Spleen (tissue), 13 donors: ENCODE measurements at regions of chr6 and their contacts with region 1.

Region 1: GRCh38 chr6:53492860-53493634 is 51.9 kb downstream of the GCLC start:
- DNase-seq: no peak
- H3K4me3 ChIP-seq: no peak overlapping the region
- H3K27ac ChIP-seq: no peak overlapping the region
- H3K4me1 ChIP-seq: peaks cover 0 to 10% (median 6%) of the 10 kb centered on the region in 6 donors
- H3K27me3 ChIP-seq: peaks cover 0 to 5% (median 0%) of the 10 kb centered on the region in 7 donors
- CTCF ChIP-seq: peak; percentile 37 to 73 (median 68)
- POLR2A ChIP-seq: no peak

Region 2: GRCh38 chr6:53651764-53652401 is 158.8 kb after region 1 on chr6:
- intact Hi-C with region 1: loop called (anchors 5 kb)
- DNase-seq: peak; percentile 95
- H3K4me3 ChIP-seq: peak overlapping the region; percentile 50 to 79 (median 62)
- H3K27ac ChIP-seq: peak overlapping the region; percentile 55 to 82 (median 78)
- H3K4me1 ChIP-seq: peaks cover 17 to 43% (median 32%) of the 10 kb centered on the region in 6 donors
- H3K27me3 ChIP-seq: peaks cover 0 to 12% (median 0%) of the 10 kb centered on the region in 7 donors
- CTCF ChIP-seq: peak in 10 of 11 experiments; percentile 19 to 66 (median 46)
- POLR2A ChIP-seq: no peak

Region 3: DNA sequence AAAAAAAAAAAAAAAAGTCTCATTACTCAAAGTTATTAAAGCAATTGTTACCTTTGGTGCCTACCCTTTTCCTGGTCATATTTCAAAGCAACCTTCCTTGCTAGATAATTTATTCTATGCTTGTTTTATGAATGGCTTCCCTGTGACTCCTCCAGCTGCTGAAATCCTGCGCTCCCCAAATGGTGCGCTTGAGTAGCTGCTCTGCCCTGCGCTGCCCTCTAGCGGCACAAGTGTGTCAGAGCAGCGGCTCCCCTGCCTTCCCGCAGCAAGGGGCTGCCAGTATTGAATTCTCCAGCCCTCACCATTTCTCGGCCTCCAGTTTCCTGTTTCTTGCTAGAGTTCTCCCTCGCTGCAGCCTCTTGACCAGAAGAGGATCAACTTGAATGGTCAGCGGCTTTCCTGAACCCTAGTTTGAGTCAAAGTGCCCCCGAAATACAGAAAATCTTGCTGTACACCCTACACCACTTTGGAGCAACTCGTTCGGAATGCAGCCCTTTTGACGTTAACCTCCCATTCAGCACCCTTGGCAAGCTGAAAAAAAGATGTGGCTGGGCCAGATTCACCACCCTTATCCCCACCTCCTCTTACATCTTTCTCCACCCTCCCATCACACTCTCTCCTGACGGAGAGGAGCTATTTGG is 232.9 kb after region 1 on chr6:
- intact Hi-C with region 1: loop called (anchors 5 kb)
- DNase-seq: peak; percentile 93
- H3K4me3 ChIP-seq: no peak overlapping the region
- H3K27ac ChIP-seq: no peak overlapping the region
- H3K4me1 ChIP-seq: peaks cover 0 to 15% (median 7%) of the 10 kb centered on the region in 6 donors
- H3K27me3 ChIP-seq: peaks cover 0 to 14% (median 0%) of the 10 kb centered on the region in 7 donors
- CTCF ChIP-seq: peak; percentile 80 to 97 (median 93)
- POLR2A ChIP-seq: no peak

Region 4: GRCh38 chr6:53737745-53738144 is 244.7 kb after region 1 on chr6:
- intact Hi-C with region 1: no loop called
- DNase-seq: no peak
- H3K4me3 ChIP-seq: no peak overlapping the region
- H3K27ac ChIP-seq: no peak overlapping the region
- H3K4me1 ChIP-seq: peaks cover 0 to 14% (median 5%) of the 10 kb centered on the region in 6 donors
- H3K27me3 ChIP-seq: no peaks in the 10 kb centered on the region
- CTCF ChIP-seq: no peak
- POLR2A ChIP-seq: no peak

Region 5: DNA sequence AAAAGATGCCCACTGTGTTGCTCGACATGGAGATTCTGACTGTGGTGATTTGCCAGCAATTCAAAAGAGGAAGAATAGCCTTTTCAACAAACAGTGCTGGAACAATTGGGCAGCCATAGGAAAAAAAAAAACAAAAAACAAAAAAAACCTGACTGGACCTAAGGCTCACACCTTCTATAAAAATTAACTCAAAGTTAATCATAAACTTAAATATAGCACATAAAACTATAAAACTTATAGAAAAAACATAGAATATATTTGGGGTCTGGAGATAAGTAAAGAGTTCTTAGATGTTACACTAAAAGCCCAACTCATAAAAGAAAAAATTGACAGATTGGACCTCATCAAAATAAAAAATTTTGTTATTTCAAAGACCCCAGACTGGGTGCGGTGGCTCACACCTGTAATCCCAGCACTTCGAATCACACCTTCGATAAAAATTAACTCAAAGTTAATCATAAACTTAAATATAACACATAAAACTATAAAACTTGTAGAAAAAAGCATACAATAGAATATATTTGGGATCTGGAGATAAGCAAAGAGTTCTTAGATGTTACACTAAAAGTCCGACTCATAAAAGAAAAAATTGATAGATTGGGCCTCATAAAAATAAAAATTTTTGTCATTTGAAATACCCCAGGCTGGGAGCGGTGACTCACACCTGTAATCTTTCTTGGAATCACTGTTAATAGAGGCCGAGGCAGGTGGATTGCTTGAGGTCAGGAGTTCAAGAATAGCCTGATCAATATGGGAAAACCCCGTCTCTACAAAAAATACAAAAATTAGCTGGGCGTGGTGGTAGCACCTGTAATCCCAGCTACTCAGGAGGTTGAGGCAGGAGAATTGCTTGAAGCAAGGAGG is 1238.0 kb after region 1 on chr6:
- intact Hi-C with region 1: no loop called
- DNase-seq: no peak
- H3K4me3 ChIP-seq: no peak overlapping the region
- H3K27ac ChIP-seq: no peak overlapping the region
- H3K4me1 ChIP-seq: no peaks in the 10 kb centered on the region
- H3K27me3 ChIP-seq: no peaks in the 10 kb centered on the region
- CTCF ChIP-seq: no peak
- POLR2A ChIP-seq: no peak